H1 (cell line): ENCODE measurements at regions of chr5 and their contacts with region 1.

Region 1: GRCh38 chr5:145697251-145697990 is 137.7 kb downstream of the PRELID2 start:
- DNase-seq: no peak
- H3K4me3 ChIP-seq: no peak overlapping the region
- H3K27ac ChIP-seq: no peak overlapping the region
- H3K4me1 ChIP-seq: no peaks in the 10 kb centered on the region
- H3K27me3 ChIP-seq: no peaks in the 10 kb centered on the region
- CTCF ChIP-seq: peak in 2 of 3 experiments; percentile 70; a peak in 3 of 4 replicates
- EP300 ChIP-seq: no peak
- POLR2A ChIP-seq: no peak
- RAD21 ChIP-seq: peak; percentile 56 to 68

Region 2: DNA sequence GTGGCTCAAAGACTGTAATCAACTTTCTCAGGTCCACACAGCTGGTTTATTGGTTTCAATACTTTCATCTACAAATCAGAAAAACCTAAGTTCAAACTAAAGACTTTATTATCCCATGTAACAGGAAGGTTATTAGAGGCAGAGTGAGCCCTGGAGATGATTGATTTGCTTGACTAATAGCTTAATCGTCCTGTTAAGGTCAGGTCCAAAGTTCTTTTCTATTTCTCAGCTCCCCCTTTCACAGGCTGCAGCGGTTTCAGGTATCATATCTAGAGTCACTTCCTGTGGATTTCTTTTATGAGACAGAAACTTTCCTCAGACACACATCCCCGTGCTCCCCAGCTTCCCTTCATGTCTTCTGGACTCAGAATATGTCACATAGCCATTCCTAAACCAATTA is 28.7 kb before region 1 on chr5:
- CTCF ChIA-PET with region 1: no interaction called
- POLR2A ChIA-PET with region 1: no interaction called
- DNase-seq: no peak
- H3K4me3 ChIP-seq: no peak overlapping the region
- H3K27ac ChIP-seq: no peak overlapping the region
- H3K4me1 ChIP-seq: no peaks in the 10 kb centered on the region
- H3K27me3 ChIP-seq: no peaks in the 10 kb centered on the region
- CTCF ChIP-seq: no peak
- EP300 ChIP-seq: no peak
- POLR2A ChIP-seq: no peak
- RAD21 ChIP-seq: no peak

Region 3: GRCh38 chr5:145681686-145682085 is 15.7 kb before region 1 on chr5:
- CTCF ChIA-PET with region 1: interaction called, 100 read pairs
- POLR2A ChIA-PET with region 1: interaction called, 4 read pairs
- DNase-seq: peak in 1 of 2 experiments; percentile 54
- H3K4me3 ChIP-seq: no peak overlapping the region
- H3K27ac ChIP-seq: no peak overlapping the region
- H3K4me1 ChIP-seq: no peaks in the 10 kb centered on the region
- H3K27me3 ChIP-seq: no peaks in the 10 kb centered on the region
- CTCF ChIP-seq: peak; percentile 33 to 87 (median 72)
- EP300 ChIP-seq: no peak
- POLR2A ChIP-seq: no peak
- RAD21 ChIP-seq: peak; percentile 61 to 71

Region 4: DNA sequence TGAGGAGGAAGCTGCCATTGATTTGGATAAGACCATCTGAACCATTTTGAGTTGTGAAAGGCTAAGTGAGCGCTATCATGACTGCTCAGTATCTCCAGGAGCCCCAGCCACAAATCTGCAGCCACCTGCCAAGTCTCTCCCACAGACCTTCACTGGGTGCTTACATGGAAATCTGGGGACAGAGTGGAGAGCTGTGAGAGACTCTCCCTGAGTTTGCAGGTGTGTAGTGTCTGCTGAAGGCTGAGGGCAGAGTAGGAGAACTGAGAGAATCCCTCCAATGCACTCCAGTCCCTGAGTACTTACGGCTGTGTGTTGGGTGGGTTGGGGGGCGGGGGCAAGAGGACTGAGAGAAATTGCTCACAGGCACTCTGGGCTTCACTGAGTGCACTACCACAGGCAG is 14.0 kb after region 1 on chr5:
- CTCF ChIA-PET with region 1: interaction called, 37 read pairs
- POLR2A ChIA-PET with region 1: interaction called, 3 read pairs
- DNase-seq: no peak
- H3K4me3 ChIP-seq: no peak overlapping the region
- H3K27ac ChIP-seq: no peak overlapping the region
- H3K4me1 ChIP-seq: no peaks in the 10 kb centered on the region
- H3K27me3 ChIP-seq: no peaks in the 10 kb centered on the region
- CTCF ChIP-seq: no peak
- EP300 ChIP-seq: no peak
- POLR2A ChIP-seq: no peak
- RAD21 ChIP-seq: no peak

Region 5: DNA sequence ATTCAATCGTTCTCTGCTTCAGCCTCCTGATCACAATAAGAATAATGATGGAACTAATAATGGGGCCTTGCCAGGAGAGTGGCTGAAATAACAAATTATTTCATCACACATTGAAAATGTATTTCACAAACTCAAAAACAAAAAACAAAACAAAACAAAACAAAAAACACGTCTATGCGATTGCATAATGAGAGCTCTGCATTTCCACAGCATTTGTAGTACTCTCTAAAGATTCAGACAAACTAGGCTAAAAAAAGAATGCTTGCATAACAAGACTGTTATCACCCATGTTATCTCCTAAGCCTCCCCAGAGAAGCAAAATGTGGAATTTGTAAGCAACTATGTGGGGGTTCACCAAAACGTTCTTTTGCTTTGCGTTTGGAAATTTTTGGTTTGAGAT is 89.6 kb after region 1 on chr5:
- CTCF ChIA-PET with region 1: interaction called, 17 read pairs
- POLR2A ChIA-PET with region 1: no interaction called
- DNase-seq: no peak
- H3K4me3 ChIP-seq: no peak overlapping the region
- H3K27ac ChIP-seq: no peak overlapping the region
- H3K4me1 ChIP-seq: no peaks in the 10 kb centered on the region; a peak in 1 of 7 replicates
- H3K27me3 ChIP-seq: no peaks in the 10 kb centered on the region
- CTCF ChIP-seq: no peak
- EP300 ChIP-seq: no peak
- POLR2A ChIP-seq: no peak
- RAD21 ChIP-seq: no peak

Region 6: DNA sequence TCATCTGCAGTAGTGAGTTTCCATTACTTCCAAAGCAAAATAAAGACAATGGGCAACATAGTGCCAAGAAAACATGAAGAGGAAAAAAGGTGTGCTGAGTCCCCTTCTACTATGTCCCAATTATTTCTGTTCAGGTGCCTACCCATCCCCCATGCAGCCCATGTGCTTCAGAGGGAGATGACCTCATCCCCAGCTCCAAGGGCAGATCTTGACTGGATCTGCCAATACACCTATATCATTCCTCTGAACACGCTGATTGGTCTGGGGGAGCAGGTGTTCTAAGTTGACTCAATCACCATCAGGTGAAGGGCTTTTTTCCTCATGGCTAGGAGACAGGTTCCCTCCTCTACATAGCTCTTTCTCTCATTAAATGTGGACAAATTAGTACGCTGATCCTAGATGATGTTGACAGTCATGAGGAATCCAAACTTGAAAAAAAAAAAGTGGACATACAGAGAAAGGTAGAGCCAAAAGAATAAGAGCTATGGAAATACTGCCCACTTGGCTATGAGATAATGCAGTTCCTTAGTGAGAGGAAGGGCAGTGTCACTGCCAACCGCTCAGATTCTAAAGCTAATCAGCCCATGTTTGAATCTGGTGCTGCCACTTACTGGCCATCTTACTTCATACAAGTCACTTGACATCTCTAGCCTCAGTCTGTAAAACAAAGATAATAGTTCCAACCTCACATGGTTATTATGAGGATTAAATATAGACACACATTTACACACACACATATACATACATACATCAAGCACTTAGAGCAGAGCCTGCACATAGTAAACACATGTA is 114.6 kb after region 1 on chr5:
- CTCF ChIA-PET with region 1: interaction called, 33 read pairs
- POLR2A ChIA-PET with region 1: no interaction called
- DNase-seq: no peak
- H3K4me3 ChIP-seq: no peak overlapping the region
- H3K27ac ChIP-seq: no peak overlapping the region
- H3K4me1 ChIP-seq: no peaks in the 10 kb centered on the region
- H3K27me3 ChIP-seq: no peaks in the 10 kb centered on the region
- CTCF ChIP-seq: peak in 2 of 3 experiments; percentile 47 to 48; a peak in 3 of 4 replicates
- EP300 ChIP-seq: no peak
- POLR2A ChIP-seq: no peak
- RAD21 ChIP-seq: peak; percentile 73 to 79

Region 7: GRCh38 chr5:145825751-145826180 is 128.3 kb after region 1 on chr5:
- CTCF ChIA-PET with region 1: interaction called, 31 read pairs
- POLR2A ChIA-PET with region 1: no interaction called
- DNase-seq: no peak
- H3K4me3 ChIP-seq: no peak overlapping the region
- H3K27ac ChIP-seq: no peak overlapping the region
- H3K4me1 ChIP-seq: no peaks in the 10 kb centered on the region
- H3K27me3 ChIP-seq: no peaks in the 10 kb centered on the region; a peak in 1 of 7 replicates
- CTCF ChIP-seq: peak in 2 of 3 experiments; percentile 65 to 89; a peak in 3 of 4 replicates
- EP300 ChIP-seq: no peak
- POLR2A ChIP-seq: no peak
- RAD21 ChIP-seq: peak; percentile 67 to 72